ENCODE measurements at regions of chr10 and their contacts with region 1.

Region 1: GRCh38 chr10:101012525-101013364 is 13.1 kb downstream of the LZTS2 start:
- DNase-seq: peak; percentile 86
- H3K4me3 Mint-ChIP-seq: peak overlapping the region; percentile 20
- H3K27ac Mint-ChIP-seq: no peak overlapping the region
- H3K4me1 Mint-ChIP-seq: peaks cover 22% of the 10 kb centered on the region
- H3K27me3 Mint-ChIP-seq: peaks cover 26% of the 10 kb centered on the region

Region 2: DNA sequence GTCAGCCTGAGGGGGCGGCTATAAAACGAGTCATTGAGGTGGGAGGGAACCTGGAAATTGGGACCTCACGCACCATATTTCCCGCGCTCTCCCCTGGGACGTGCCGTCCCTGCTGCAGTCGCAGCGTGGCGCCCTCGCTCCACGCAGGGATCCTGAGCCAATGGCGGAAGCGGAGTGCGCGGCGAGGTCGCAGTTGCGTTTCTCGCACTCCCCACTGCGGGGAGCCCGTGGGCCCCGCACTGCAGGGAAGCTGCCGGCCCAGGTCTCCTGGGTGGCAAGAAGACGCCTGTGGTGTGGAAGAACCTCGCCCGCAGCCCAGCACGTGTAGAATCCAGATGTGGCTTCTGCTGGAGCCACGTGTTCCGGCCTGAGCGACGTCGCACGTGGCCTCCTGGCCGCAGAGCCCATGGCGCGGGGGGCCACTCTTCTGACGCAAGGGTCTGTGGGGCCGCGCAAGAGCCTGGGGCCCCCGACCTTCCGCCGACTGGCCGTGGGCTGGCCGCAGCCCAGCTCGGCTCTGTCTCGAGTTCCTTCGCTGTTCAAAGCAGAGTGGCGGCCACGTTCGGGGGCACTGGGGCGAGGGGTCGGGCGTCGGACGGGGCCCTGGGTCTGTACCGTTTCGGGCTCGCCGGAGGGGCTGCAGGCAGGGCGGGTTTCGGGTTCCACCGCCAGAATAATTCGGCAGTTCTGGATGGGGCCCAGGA is 450.6 kb before region 1 on chr10:
- CTCF ChIA-PET with region 1: interaction called, 10 read pairs
- POLR2A ChIA-PET with region 1: no interaction called
- intact Hi-C with region 1: loop called (anchors 5 kb)
- DNase-seq: peak; percentile 86
- H3K4me3 Mint-ChIP-seq: no peak overlapping the region
- H3K27ac Mint-ChIP-seq: no peak overlapping the region
- H3K4me1 Mint-ChIP-seq: peaks cover 10% of the 10 kb centered on the region
- H3K27me3 Mint-ChIP-seq: peaks cover 29% of the 10 kb centered on the region

Region 3: GRCh38 chr10:100670828-100671479 is 341.8 kb before region 1 on chr10:
- CTCF ChIA-PET with region 1: no interaction called
- POLR2A ChIA-PET with region 1: no interaction called
- intact Hi-C with region 1: no loop called
- DNase-seq: peak; percentile 75
- H3K4me3 Mint-ChIP-seq: no peak overlapping the region
- H3K27ac Mint-ChIP-seq: no peak overlapping the region
- H3K4me1 Mint-ChIP-seq: peaks cover 3% of the 10 kb centered on the region
- H3K27me3 Mint-ChIP-seq: peaks cover 56% of the 10 kb centered on the region

Region 4: DNA sequence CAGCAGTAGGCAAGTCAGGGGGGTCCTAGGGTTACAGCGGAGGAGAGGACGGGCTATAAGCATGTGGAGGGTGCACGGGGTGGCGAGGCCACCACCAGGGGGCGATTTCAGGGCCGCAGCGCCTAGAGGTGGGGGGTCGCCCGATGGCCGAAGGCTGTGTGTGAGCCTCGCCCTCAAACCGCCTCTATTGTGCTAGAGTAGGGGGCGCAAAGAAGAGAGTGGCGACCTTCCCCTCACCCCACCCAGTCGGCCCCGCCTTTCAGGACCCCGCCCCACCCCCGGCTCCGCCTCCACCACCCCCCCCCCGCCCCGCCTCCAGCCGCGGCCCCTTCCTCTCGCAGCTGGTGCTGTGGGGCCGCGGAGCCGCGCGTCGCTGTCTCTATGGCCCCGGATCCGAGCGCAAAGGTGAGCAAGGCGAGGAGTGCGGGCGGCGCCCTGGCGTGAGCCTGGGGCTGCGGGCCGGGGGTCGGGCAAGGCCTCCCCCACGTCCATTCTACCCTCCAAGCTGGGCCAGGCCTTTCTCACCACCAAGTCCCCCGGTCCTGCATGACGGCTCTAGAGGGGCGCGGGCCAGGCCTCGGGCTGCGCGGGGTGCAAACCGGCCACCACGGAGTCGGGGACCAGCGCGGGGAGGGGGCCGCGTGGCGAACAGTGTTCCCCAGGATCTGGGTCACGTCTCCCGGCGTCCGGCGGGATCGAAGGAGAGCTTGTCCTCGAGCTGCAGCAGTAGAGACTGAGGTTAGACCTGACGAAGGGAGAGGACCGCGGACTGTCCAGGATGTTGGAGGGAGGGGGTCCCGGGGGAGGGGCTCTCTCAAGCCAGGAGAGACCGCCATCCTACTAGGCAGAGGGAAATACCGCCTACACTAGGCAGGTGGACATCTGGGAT is 43.3 kb before region 1 on chr10 and contains the start of gene SEMA4G:
- CTCF ChIA-PET with region 1: interaction called, 35 read pairs
- POLR2A ChIA-PET with region 1: no interaction called
- intact Hi-C with region 1: loop called (anchors 5 kb)
- DNase-seq: peak; percentile 43
- H3K4me3 Mint-ChIP-seq: peak within 1 kb of the TSS; percentile 36
- H3K27ac Mint-ChIP-seq: no peak within 1 kb of the TSS
- H3K4me1 Mint-ChIP-seq: peaks cover 8% of the 10 kb centered on the region
- H3K27me3 Mint-ChIP-seq: no peaks in the 10 kb centered on the region
- total RNA-seq, gene SEMA4G: 0.58 to 0.74 TPM

Region 5: DNA sequence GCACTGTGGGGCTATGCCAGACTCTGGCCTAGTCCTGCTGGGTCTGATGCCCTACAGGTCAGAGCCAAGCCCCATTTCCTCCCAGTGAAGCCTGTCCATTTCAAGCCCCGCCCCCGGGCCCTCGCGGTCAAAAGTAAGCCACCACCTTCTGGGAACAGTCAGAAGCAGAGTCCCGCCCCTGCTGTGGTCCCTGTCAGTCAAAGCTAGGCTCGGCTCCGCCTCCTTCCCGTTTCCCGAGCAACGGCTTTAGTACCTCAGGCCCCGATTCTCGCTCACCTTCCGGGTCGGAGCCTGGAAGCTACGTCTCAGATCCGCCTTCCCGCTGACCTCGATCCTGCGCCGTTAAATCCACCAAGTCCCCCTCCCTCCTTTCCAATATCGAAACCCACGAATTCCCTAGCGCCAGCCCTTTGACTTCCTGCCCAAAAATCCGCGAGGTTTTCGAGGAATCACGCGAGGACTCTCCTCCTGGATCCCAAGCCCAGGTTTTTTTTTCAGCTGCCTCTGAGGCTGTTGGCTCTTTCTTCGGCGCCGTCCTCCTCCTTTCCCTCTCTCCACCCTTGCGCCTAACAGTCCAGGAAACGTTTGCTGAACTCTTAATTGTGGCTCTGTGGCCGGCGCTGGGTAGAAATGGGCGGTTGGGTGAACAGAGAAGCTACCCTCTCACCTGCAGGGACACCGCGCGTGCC is 30.1 kb after region 1 on chr10:
- CTCF ChIA-PET with region 1: interaction called, 10 read pairs
- POLR2A ChIA-PET with region 1: no interaction called
- intact Hi-C with region 1: no loop called
- DNase-seq: peak; percentile 96
- H3K4me3 Mint-ChIP-seq: peak overlapping the region; percentile 96
- H3K27ac Mint-ChIP-seq: peak overlapping the region; percentile 89
- H3K4me1 Mint-ChIP-seq: peaks cover 21% of the 10 kb centered on the region
- H3K27me3 Mint-ChIP-seq: peaks cover 18% of the 10 kb centered on the region

Region 6: GRCh38 chr10:101067356-101068083 is 54.8 kb after region 1 on chr10:
- CTCF ChIA-PET with region 1: interaction called, 24 read pairs
- POLR2A ChIA-PET with region 1: no interaction called
- intact Hi-C with region 1: no loop called
- DNase-seq: peak; percentile 87
- H3K4me3 Mint-ChIP-seq: peak overlapping the region; percentile 73
- H3K27ac Mint-ChIP-seq: no peak overlapping the region
- H3K4me1 Mint-ChIP-seq: peaks cover 12% of the 10 kb centered on the region
- H3K27me3 Mint-ChIP-seq: peaks cover 43% of the 10 kb centered on the region

Measured in activated CD4-positive, alpha-beta memory T cell treated with anti-CD3 and anti-CD28 coated beads for 36 hours (primary cell).